AG04449 (cell line): ENCODE measurements at regions of chr3 and their contacts with region 1.

Region 1: DNA sequence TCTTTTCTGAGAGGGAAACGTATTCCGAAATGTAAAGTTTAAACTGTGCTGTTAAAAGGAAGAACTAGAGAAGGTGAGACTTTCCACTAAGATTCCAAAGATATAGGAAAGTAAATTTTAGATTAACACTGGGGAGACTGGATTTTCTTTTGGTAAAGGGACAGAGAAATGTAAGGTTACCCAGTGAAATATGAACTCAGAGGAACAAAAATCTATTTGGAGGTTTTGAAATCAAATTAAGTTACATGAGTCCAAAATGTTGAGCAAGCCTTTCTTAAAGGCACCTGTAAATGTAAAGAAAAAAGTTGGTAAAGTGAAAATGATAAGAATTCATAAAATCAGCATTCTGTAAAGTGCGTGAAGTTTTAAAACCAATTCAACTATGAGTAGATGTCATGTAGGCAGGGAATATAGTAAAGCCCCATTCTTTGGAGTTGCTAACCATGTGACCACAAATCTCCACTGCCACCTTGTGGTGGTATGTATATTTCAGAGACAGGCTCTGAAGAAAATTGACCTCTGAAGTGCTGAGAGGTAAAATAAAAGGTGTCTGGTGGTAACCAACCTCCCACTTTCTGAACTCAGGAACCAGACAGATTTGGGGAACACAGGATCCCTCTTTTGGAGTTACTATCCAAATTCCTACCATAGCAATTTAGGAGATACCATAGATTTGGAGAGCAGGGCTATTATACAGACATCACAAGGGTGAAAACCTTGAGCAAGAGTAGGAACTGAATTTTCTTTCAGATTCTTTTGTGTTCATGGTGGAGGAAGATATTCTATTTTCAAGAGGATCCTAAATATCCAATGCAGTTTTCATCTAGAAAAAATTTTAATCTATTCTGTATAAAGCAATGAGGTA is 215.3 kb downstream of the ROBO2 start:
- DNase-seq: no peak
- H3K4me3 ChIP-seq: no peak overlapping the region
- CTCF ChIP-seq: peak; percentile 43

Region 2: GRCh38 chr3:77038468-77038929 is 216.7 kb before region 1 on chr3:
- CTCF ChIA-PET with region 1: interaction called, 13 read pairs
- POLR2A ChIA-PET with region 1: no interaction called
- DNase-seq: peak; percentile 23
- H3K4me3 ChIP-seq: peak overlapping the region; percentile 34
- CTCF ChIP-seq: peak; percentile 64